ENCODE measurements at regions of chr1 and their contacts with region 1.

Region 1: DNA sequence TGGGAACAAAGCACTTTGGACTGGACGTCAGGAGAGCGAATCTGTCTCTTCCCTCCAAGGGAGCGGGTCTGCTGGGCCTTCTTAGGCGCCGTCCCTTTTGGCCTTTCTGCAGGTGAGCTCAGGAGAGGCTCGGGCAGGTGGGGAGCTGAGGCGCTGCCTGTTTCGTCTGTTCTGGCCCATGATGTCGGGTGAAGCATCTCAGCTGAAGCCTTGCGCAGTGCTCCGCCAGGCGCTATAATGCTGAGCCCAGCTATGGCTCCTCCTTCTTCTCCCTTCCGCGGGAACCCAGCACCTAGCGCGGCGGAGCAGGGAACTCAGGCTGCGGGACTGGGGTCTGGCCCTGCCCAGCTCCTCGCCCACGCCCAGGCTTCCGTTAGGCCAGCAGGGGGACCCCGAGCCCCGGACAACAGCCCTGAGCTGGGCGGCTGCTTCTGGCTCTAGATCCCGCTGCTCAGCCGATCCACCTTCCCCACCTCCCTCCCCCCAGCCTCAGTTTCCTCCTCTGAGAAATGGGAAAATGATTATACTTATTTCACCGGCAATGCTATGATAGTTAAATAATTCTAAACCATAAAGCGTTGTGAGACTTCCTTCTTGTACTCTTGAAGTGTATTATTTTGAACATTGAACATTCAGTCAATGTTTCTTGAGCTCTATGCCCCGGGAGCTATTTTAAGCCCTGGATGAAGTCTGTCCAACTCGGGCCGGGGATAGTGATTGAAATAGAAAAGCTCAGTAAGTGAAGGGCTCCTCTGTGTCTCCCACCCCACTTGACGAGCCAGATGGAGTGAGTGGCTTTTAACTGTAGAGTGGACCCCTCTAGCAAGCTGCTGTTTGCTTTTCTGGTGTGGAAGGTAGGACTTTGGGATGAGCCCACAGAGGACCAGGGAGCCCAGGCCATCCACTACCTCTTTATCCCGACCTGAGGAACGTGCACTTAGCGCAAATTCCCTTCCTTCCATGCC is 9.6 kb upstream of the ADORA1 start:
- H3K4me3 ChIP-seq: no peak overlapping the region
- H3K27ac ChIP-seq: no peak overlapping the region
- H3K4me1 ChIP-seq: no peaks in the 10 kb centered on the region
- CTCF ChIP-seq: peak; percentile 92

Region 2: DNA sequence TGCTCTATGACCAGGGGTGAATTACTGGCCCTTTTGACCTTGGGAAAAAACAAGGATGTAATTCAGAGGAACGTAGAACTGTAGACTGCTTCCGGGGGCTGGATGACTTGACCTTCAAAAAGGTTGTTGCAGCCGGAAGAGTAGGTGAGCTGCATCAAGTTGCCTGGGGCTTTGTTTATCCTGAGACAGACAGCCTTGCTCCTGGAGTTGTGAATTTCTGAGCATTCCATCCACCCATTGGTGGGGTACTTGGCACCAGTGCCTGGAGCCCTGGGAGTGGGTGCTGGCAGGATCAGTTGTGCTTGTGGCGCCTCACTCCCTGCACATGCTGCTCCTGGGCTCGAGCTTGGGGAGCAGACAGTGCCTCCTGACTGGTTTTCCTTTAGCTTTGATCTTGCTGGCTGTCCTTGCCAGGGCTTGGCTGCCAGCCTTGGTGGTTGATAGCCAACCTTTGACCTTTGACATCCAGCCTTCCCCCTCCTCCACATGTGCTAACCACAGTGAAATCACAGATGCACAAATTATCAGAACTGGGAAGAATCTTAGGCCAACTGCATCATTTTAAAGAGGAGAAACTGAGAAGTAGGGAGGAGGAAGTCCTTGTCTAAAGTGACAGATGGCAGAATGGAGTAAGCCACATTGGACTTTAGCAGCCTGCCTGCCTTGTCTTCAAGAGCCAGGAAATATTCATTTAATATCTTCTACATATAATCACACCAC is 15.8 kb before region 1 on chr1:
- CTCF ChIA-PET with region 1: interaction called, 18 read pairs
- POLR2A ChIA-PET with region 1: no interaction called
- H3K4me3 ChIP-seq: no peak overlapping the region
- H3K27ac ChIP-seq: no peak overlapping the region
- H3K4me1 ChIP-seq: no peaks in the 10 kb centered on the region
- CTCF ChIP-seq: no peak

Region 3: GRCh38 chr1:203133970-203134725 is 16.3 kb after region 1 on chr1:
- CTCF ChIA-PET with region 1: interaction called, 40 read pairs
- POLR2A ChIA-PET with region 1: interaction called, 3 read pairs
- H3K4me3 ChIP-seq: no peak overlapping the region
- H3K27ac ChIP-seq: no peak overlapping the region
- H3K4me1 ChIP-seq: no peaks in the 10 kb centered on the region
- CTCF ChIP-seq: no peak

Region 4: GRCh38 chr1:203166566-203166940 is 48.7 kb after region 1 on chr1:
- CTCF ChIA-PET with region 1: interaction called, 113 read pairs
- POLR2A ChIA-PET with region 1: no interaction called
- H3K4me3 ChIP-seq: no peak overlapping the region
- H3K27ac ChIP-seq: no peak overlapping the region
- H3K4me1 ChIP-seq: no peaks in the 10 kb centered on the region
- CTCF ChIP-seq: peak; percentile 56; the same call in 1 of the 2 replicates

Region 5: DNA sequence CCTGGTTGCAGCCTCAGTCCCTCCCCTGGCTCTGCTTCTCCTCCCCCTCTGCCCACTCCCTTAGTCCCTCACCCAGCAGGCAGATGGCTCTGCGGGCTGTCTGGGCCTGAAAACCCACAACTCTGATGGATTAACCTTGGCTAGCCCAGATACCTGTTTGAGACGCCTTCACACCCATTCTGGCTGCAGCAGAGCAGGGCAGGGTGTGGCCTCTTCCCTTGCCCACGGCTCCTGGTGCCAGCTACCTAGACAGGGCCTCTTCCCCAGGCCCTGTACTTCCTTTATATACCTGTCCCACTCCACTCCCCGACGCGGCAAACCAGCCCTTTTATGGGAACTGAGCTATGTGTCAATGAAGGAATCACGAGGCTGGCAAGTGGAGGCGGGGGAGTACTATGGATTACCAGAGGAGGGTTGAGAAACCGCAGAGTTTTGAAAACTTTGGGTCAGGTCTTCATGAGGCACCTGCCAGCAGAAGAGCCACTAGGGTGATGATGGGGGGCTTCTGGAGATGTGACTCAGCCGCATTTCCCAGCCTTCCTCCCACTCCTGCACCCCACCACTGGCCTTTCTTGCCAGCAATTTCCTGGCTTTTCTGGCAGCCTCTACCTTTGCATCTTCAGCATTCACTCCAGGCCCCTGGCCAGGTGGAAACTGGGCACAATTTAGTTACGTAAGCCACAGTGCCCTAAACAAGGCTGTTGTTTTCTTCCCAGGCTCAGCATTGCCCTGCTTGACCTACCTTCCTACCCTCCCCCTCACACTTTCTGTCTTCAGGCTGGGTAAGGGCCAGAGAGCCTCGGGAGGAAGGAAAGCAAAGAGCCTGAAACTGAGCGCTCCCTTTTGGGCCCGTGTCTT is 68.8 kb after region 1 on chr1 and contains the start of gene CHI3L1:
- CTCF ChIA-PET with region 1: interaction called, 14 read pairs
- POLR2A ChIA-PET with region 1: interaction called, 3 read pairs
- H3K4me3 ChIP-seq: no peak within 1 kb of the TSS
- H3K27ac ChIP-seq: no peak within 1 kb of the TSS
- H3K4me1 ChIP-seq: no peaks in the 10 kb centered on the region
- CTCF ChIP-seq: no peak

Region 6: DNA sequence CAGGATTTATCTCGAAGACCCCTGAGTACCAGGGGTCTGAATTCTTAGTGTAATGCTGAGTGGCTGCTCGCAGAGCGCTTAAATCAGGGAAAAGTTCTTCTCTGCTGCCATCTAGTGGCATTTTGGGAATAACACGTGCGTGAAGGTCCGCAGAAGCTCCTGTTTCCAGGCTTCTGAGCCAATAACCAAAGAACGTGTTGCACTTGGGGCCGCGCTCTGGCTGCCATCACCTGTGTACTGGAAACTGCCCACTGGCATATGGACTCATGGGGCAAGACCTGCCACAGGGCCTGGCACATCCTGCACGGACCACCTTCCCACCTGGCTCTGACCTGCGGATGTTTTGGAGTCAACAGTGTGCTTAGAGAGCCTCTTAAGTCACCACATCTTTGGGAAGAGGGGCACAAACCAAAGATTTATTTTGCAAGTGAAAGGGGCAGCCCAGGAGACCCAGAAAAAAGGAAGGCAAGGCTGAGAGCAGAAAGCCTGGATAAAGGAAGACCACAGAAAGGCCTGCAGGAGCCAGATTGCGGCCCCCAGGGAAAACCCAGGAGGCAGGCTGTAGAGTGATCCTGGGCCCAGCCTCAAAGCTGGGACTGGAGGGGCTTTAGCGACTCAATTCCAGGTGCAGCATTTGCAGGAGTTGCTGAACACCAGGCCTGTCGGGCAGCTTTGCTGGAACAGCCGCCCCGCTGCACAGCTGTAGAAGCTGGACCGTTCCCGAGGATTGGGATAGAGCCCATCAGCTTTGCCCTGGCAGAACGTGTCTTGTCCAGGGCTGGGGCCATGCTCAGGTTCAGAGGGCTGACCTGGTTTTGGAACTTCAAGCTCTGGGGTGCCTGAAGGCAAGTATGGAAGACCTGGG is 98.6 kb after region 1 on chr1:
- CTCF ChIA-PET with region 1: interaction called, 226 read pairs
- POLR2A ChIA-PET with region 1: interaction called, 4 read pairs
- H3K4me3 ChIP-seq: no peak overlapping the region
- H3K27ac ChIP-seq: no peak overlapping the region
- H3K4me1 ChIP-seq: no peaks in the 10 kb centered on the region
- CTCF ChIP-seq: peak; percentile 65

Region 7: GRCh38 chr1:203224716-203225470 is 107.0 kb after region 1 on chr1:
- CTCF ChIA-PET with region 1: interaction called, 226 read pairs
- POLR2A ChIA-PET with region 1: no interaction called
- H3K4me3 ChIP-seq: no peak overlapping the region
- H3K27ac ChIP-seq: no peak overlapping the region
- H3K4me1 ChIP-seq: no peaks in the 10 kb centered on the region
- CTCF ChIP-seq: no peak